Sigmoid colon (tissue), 7 donors: ENCODE measurements at regions of chr15 and their contacts with region 1.

Region 1: GRCh38 chr15:66386204-66387123 is at the start of gene MAP2K1:
- DNase-seq: peak; percentile 99
- H3K4me3 ChIP-seq: peak within 1 kb of the TSS; percentile 71 to 99 (median 87)
- H3K27ac ChIP-seq: peak within 1 kb of the TSS; percentile 93 to 99 (median 98)
- H3K4me1 ChIP-seq: peaks cover 0 to 33% (median 21%) of the 10 kb centered on the region in 4 donors
- H3K27me3 ChIP-seq: no peaks in the 10 kb centered on the region
- CTCF ChIP-seq: peak; percentile 36 to 69 (median 52)
- EP300 ChIP-seq: peak in 2 of 4 donors; percentile 5 to 43
- POLR2A ChIP-seq: peak; percentile 43 to 60
- total RNA-seq, gene MAP2K1: 21.0 to 32.8 (median 25.7) TPM

Region 2: GRCh38 chr15:66356345-66357236 is 29.9 kb before region 1 on chr15 and contains the start of gene TIPIN:
- intact Hi-C with region 1: loop called (anchors 1 kb)
- DNase-seq: peak; percentile 98
- H3K4me3 ChIP-seq: peak within 1 kb of the TSS; percentile 51 to 85 (median 72)
- H3K27ac ChIP-seq: peak within 1 kb of the TSS; percentile 80 to 88 (median 86)
- H3K4me1 ChIP-seq: peaks cover 0 to 11% (median 8%) of the 10 kb centered on the region in 4 donors
- H3K27me3 ChIP-seq: no peaks in the 10 kb centered on the region
- CTCF ChIP-seq: no peak
- EP300 ChIP-seq: no peak
- POLR2A ChIP-seq: no peak
- total RNA-seq, gene TIPIN: 1.9 to 10.3 (median 6.1) TPM

Region 3: DNA sequence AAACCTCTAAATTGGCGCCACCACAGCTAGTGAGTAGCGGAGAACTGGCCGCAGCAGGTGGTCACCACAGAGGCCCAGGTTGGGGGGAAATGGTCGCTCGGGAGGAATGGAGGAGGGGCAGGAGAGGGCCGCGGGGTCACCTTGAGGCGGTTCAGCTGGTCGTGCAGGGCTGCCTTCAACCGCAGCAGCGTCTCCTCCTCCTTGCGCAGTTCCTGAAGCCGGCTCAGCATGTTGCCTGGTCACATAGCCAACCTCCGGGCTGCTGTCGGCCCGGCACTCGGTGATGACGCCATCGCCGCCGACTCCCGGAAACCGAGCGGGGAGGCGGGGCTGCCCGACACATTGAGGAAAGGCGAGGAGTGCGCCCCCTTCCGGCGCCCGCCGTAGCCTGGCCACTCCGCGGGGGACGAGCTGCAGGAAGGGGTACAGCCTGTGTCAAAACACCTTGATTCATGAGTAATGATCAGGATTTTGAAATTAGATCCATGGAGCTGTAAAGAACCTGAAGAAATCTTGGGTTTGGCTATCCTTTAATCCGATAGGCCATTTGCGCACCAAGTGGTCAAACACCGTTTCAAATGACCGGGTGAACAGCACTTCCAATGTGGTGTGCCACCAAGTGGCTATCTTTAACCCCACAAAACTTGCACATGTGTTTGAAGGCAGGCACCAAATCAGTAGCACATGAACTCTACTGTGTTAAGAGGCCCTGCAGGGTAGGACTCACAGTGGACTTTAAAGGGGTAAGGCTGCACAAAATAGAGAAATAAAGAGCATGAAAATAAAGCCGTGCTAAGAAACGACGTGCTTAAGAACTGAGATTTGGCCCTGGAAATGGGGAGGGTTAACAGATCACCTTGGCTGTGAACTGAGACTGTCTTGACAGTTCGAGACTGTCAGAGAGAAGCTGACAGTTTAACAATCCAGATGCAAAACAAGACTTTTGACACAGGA is 111.3 kb after region 1 on chr15 and contains the start of gene SNAPC5:
- intact Hi-C with region 1: loop called (anchors 1 kb)
- DNase-seq: peak; percentile 97
- H3K4me3 ChIP-seq: peak within 1 kb of the TSS; percentile 80 to 95 (median 88)
- H3K27ac ChIP-seq: peak within 1 kb of the TSS; percentile 86 to 92 (median 92)
- H3K4me1 ChIP-seq: peaks cover 0 to 27% (median 23%) of the 10 kb centered on the region in 4 donors
- H3K27me3 ChIP-seq: no peaks in the 10 kb centered on the region
- CTCF ChIP-seq: peak; percentile 91 to 96 (median 95)
- EP300 ChIP-seq: peak in 1 of 4 donors; percentile 56
- POLR2A ChIP-seq: peak; percentile 35 to 50
- total RNA-seq, gene SNAPC5: 16.6 to 65.5 (median 53.3) TPM

Region 4: DNA sequence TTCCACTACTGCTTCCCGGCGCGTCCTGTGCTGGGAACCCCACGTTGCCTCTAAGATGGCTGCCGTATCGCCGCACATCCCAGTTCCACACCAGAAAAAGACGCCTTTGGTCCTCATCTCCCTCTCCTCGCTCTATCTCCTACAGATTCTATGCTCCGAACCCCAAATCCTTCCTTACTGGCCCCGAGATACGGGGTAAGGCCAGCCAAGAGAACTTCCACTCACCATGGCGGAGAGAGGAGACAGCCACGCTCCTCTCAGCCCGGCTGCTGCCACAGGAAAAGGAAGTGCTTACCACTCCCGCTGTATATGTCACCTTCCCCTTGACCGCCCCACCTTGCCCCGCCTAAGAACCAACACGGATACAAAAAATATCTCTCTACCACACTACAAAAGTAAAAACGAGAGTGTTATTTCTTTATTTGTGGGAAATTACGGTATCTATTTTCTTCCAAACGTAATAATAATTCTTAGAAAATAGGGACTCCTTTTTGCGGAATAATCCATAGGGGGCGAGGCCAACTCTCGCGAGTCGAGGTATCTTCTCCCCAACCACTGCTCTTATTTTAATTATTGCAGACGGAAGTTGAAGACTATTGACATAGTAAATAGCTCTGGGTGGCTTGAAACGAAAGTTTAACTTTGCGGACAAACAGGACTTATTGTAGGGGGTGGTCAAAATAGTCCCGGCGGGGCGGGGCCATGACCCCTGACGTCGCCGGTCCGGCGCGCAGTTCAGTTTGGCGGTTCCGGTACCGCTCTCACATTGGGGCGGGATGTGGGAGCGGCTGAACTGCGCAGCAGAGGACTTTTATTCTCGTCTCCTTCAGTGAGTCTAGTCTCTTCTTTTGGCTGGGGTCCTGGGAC is 118.3 kb after region 1 on chr15 and contains the starts of genes RPL4 and ZWILCH:
- intact Hi-C with region 1: loop called (anchors 2 kb)
- DNase-seq: peak; percentile 90
- H3K4me3 ChIP-seq: peak within 1 kb of the TSS; percentile 65 to 87 (median 78)
- H3K27ac ChIP-seq: peak within 1 kb of the TSS; percentile 88 to 90 (median 89)
- H3K4me1 ChIP-seq: peaks cover 0 to 30% (median 22%) of the 10 kb centered on the region in 4 donors
- H3K27me3 ChIP-seq: no peaks in the 10 kb centered on the region
- CTCF ChIP-seq: no peak
- EP300 ChIP-seq: no peak
- POLR2A ChIP-seq: peak; percentile 98 to 99
- total RNA-seq, gene RPL4: 2,778 to 9,223 (median 4,574) TPM
- total RNA-seq, gene ZWILCH: 3.1 to 8.2 (median 3.6) TPM